Ascending aorta (tissue), 2 donors: ENCODE measurements at regions of chr2 and their contacts with region 1.

Region 1: DNA sequence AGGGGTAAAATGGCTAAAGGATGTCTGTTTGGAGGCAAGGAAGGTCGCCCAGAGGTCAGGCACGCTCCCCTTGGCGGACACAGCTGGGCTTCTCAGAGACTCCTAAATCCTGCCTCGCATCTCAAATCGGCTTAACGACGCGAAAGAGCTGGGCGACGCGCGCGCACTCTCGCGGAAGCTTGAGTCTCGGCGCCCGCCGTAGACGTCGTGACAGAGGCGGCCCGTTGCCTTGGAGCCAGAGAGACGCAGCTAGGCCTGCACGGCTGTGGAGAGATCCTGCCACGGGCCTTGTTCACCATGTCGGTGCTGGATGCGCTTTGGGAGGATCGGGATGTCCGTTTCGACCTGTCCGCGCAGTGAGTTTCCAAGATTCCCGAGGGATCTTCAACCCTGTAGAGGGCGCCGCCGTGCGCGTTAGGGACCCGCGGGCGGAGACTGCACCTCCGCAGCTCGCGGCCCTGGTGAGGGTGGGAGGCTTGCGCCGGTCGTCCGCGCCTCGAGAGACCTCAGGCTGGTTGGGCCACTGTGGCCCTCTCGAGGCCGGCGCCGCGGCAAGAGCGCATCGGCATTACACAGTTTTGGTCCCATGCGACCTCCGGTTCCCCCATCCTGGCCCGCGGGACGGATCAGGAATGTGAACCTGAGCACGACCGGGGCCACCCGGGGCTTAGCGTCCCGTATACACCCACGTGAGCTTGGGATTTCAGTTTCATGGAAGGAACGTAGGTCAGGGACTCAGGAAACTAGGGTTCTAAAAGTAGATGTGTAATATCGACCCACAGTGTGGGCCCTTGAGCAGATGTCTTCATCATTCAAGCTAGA is at the start of gene BBS5:
- DNase-seq: peak; percentile 18 to 87
- H3K4me3 ChIP-seq: peak within 1 kb of the TSS; percentile 67 to 83
- H3K27ac ChIP-seq: peak within 1 kb of the TSS; percentile 35 to 76
- H3K4me1 ChIP-seq: peaks cover 0 to 5% of the 10 kb centered on the region in 2 donors
- H3K27me3 ChIP-seq: no peaks in the 10 kb centered on the region
- CTCF ChIP-seq: peak in 2 of 3 experiments; percentile 39 to 61
- total RNA-seq, gene BBS5: 1.5 TPM

Region 2: GRCh38 chr2:169372561-169372960 is 106.9 kb before region 1 on chr2:
- intact Hi-C with region 1: no loop called
- DNase-seq: no peak
- H3K4me3 ChIP-seq: no peak overlapping the region
- H3K27ac ChIP-seq: no peak overlapping the region
- H3K4me1 ChIP-seq: no peaks in the 10 kb centered on the region
- H3K27me3 ChIP-seq: no peaks in the 10 kb centered on the region
- CTCF ChIP-seq: no peak

Region 3: DNA sequence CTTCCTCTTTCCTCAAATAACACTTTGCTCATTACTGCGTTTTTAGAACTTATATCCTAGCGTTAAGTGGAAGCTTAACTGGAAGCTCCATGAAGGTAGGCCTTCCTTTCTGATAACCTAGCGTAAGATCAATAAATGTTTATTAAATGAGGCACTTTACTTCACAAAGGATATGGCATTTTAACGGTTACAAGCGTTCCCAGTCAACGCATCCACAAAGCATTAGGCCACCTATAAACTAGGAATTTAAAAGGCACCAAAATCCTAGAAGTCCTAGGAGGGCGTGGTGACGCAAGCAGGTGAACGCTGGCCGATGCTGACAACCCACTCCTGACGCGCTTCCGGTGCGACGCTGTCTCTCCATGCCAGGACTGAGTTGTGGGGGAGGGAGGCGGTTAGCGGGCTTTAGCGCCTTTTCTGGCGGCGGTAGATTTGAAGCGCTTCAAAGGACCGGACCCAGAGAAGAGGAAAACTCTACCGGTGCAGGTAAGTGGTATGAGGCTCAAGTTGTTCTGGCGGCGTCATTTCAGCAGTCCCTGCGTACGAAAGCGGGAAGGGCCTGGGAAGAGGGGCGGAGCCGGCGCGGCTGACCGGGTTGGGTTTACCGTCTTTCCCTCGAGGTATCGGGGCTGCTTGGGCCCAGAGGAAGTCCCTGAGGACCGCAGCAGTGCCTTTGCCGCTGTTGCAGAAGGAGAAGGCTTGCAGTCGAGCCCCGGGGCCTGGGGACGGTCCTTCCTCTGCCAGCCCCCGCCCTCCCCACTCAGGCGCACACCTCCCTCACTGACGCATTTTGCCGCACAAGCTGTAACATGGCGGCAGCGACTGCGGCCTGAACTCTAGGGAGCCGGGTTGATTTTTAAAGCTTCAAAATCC is 104.8 kb after region 1 on chr2 and contains the start of gene PPIG:
- intact Hi-C with region 1: loop called (anchors 5 kb)
- DNase-seq: peak; percentile 62 to 95
- H3K4me3 ChIP-seq: peak within 1 kb of the TSS; percentile 77 to 86
- H3K27ac ChIP-seq: peak within 1 kb of the TSS; percentile 96 to 98
- H3K4me1 ChIP-seq: peaks cover 6 to 22% of the 10 kb centered on the region in 2 donors
- H3K27me3 ChIP-seq: no peaks in the 10 kb centered on the region
- CTCF ChIP-seq: no peak
- total RNA-seq, gene PPIG: 30.2 TPM

Region 4: GRCh38 chr2:170139276-170139967 is 660.0 kb after region 1 on chr2:
- intact Hi-C with region 1: no loop called
- DNase-seq: no peak
- H3K4me3 ChIP-seq: no peak overlapping the region
- H3K27ac ChIP-seq: no peak overlapping the region
- H3K4me1 ChIP-seq: no peaks in the 10 kb centered on the region
- H3K27me3 ChIP-seq: no peaks in the 10 kb centered on the region
- CTCF ChIP-seq: no peak